Lower lobe of right lung (tissue), 2 donors: ENCODE measurements at regions of chr11 and their contacts with region 1.

Region 1: GRCh38 chr11:2532704-2533586 is 88.1 kb downstream of the KCNQ1 start:
- DNase-seq: peak; percentile 93
- ATAC-seq: peak; percentile 88 to 91
- H3K4me3 ChIP-seq: peak overlapping the region; percentile 44
- H3K27ac ChIP-seq: peak overlapping the region; percentile 5
- H3K4me1 ChIP-seq: peaks cover 18% of the 10 kb centered on the region
- H3K27me3 ChIP-seq: no peaks in the 10 kb centered on the region
- CTCF ChIP-seq: peak; percentile 100

Region 2: DNA sequence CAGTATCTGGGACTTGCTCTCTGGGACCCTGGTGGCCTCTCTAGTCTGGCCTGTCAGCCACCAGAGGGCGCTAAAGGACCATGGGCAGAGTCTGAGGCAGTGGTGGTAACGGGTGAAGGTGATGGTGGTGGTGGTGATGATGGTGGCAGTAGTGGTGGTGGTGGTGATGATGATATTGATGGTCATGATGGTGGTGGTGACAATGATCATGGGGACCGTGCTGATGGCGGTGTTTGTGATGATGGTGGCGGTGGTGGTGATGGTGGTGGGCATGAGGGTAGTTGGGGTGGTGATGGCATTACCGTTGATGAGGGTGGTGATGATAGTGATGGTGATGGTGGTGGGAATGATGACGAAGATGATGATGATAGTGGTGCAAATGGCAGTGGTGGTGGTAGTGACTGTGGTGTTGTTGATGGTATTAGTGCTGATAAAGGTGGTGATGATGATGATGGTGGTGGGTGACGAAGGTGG is 104.6 kb before region 1 on chr11:
- intact Hi-C with region 1: loop called (anchors 5 kb)
- DNase-seq: peak; percentile 86
- ATAC-seq: peak; percentile 82 to 90
- H3K4me3 ChIP-seq: no peak overlapping the region
- H3K27ac ChIP-seq: no peak overlapping the region
- H3K4me1 ChIP-seq: no peaks in the 10 kb centered on the region
- H3K27me3 ChIP-seq: no peaks in the 10 kb centered on the region
- CTCF ChIP-seq: peak; percentile 91

Region 3: GRCh38 chr11:2860636-2861035 is 327.7 kb after region 1 on chr11:
- intact Hi-C with region 1: no loop called
- DNase-seq: no peak
- ATAC-seq: peak in 1 of 2 donors; percentile 22
- H3K4me3 ChIP-seq: no peak overlapping the region
- H3K27ac ChIP-seq: no peak overlapping the region
- H3K4me1 ChIP-seq: peaks cover 6% of the 10 kb centered on the region
- H3K27me3 ChIP-seq: peaks cover 18% of the 10 kb centered on the region
- CTCF ChIP-seq: no peak

Region 4: DNA sequence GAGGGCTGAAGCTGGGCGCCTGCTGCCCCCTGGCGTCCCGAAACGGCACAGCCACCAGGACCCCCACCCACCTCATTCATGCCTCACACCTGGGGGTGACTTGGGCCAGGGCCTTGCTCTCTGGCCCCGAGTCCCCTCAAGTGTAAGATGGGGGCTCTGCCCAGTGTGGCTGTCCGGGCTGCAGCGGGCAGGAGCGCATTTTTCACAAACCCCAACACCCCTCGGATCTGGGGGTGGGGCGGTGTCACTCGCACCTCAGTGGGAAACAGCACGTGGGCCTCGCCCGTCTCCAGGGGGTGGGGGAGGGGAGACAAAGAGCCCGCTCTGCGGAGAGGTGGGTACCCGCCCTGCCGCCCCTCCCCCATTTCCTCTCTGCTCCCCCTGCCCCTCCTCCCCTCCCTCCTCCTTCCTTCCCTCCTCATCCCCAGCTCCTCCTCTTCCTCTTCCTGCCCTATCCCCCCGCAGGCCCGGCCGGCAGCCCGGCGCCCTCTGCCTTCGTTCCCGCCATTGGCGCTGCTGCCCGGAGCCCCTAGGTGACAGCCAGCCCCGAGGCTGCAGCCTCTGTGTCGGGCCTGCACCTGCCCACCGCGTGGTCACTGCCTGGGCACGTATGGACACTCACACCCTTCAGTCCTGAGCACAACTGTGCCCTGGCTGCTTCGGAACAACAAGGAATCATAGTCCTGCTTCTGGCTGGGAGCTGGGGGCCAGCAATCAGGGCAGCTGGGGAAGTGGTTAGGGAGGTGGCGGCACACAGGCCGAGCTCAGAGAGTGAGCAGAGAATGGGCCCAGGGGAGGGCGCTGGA is 359.5 kb after region 1 on chr11:
- intact Hi-C with region 1: loop called (anchors 5 kb)
- DNase-seq: peak; percentile 67
- ATAC-seq: peak; percentile 59 to 68
- H3K4me3 ChIP-seq: peak overlapping the region; percentile 56
- H3K27ac ChIP-seq: peak overlapping the region; percentile 72
- H3K4me1 ChIP-seq: peaks cover 37% of the 10 kb centered on the region
- H3K27me3 ChIP-seq: no peaks in the 10 kb centered on the region
- CTCF ChIP-seq: peak; percentile 91